ENCODE measurements at regions of chr2 and their contacts with region 1.

Region 1: DNA sequence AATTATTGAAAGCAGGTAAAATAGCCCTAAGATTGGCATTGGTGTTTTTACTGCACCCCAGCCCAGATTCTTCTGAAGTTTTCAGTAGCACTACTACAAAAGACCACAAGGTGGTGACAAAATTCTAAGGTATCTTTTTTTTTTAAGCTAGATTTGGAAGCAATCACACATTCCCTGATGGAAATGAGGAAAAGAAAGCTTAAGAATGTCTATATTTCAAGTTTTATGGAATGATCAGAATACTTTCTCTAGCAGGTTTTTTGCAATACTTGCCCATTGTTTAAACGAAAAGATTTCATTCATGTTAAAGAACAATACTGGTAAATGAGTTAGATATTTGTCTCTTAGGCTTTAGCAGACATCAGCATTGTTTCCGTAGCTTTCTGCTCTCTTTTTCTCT is 32.1 kb upstream of the ZNF638 start:
- DNase-seq: peak; percentile 51
- H3K4me3 ChIP-seq: no peak overlapping the region; a peak in 1 of 4 replicates
- H3K27ac ChIP-seq: no peak overlapping the region
- H3K4me1 ChIP-seq: no peaks in the 10 kb centered on the region
- H3K27me3 ChIP-seq: no peaks in the 10 kb centered on the region
- CTCF ChIP-seq: peak; percentile 78
- EP300 ChIP-seq: no peak
- RAD21 ChIP-seq: peak; percentile 79

Region 2: GRCh38 chr2:71008342-71008741 is 291.2 kb before region 1 on chr2:
- CTCF ChIA-PET with region 1: no interaction called
- POLR2A ChIA-PET with region 1: no interaction called
- DNase-seq: no peak
- H3K4me3 ChIP-seq: no peak overlapping the region
- H3K27ac ChIP-seq: no peak overlapping the region
- H3K4me1 ChIP-seq: no peaks in the 10 kb centered on the region
- H3K27me3 ChIP-seq: peaks cover 14% of the 10 kb centered on the region; the same call in 1 of the 2 replicates
- CTCF ChIP-seq: no peak
- EP300 ChIP-seq: no peak
- RAD21 ChIP-seq: no peak

Region 3: DNA sequence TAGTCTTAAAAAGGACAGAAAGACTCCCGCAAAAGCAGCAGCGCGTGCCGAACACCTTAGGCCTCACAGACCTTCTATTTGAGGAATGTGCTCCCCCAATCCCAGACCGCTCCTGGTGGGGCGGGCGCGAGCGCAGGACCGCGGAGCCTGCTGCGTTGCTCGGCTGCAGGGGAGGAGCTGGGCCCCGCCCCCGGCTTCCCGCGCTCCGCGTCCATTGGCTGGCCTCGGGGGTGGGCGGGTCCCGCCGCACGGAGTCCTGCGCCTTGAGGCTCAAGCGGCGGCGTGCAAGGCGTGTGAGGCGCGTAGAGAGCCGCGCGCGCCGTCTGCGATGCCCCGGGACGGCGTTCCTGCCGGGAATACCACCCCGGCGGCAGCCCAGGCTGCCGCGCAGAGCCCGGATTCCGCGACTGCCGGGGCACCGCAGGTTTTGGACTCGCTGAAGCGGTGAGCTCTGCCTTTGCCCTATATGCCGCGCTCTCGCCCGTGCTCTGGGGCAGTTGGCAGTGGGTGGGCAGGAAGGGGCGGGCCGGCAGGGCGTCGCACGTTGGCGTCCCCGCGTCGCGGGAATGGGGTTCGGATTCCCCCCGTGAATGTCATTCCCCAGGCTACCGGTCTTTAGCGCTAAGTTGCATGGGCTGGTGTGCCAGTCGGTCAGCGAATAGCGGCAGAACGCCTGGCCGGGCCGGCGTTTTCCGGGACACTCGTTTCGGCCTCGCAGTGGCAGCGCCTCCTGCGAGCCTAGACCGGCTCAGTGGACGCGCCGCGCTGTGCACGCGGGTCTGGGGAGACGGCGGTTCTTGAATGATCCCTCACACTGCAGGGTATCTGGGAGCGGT is 23.0 kb before region 1 on chr2:
- CTCF ChIA-PET with region 1: interaction called, 24 read pairs
- POLR2A ChIA-PET with region 1: no interaction called
- DNase-seq: peak; percentile 95
- H3K4me3 ChIP-seq: peak overlapping the region; percentile 61 to 67
- H3K27ac ChIP-seq: peak overlapping the region; percentile 23 to 44; a peak in 2 of 4 replicates
- H3K4me1 ChIP-seq: peaks cover 0 to 2% of the 10 kb centered on the region in 2 experiments; a peak in 2 of 4 replicates
- H3K27me3 ChIP-seq: no peaks in the 10 kb centered on the region; the same call in 1 of the 2 replicates
- CTCF ChIP-seq: no peak
- EP300 ChIP-seq: no peak
- RAD21 ChIP-seq: no peak

Region 4: GRCh38 chr2:71317060-71317459 is 17.6 kb after region 1 on chr2:
- CTCF ChIA-PET with region 1: interaction called, 16 read pairs
- POLR2A ChIA-PET with region 1: no interaction called
- DNase-seq: no peak
- H3K4me3 ChIP-seq: no peak overlapping the region
- H3K27ac ChIP-seq: no peak overlapping the region
- H3K4me1 ChIP-seq: no peaks in the 10 kb centered on the region; a peak in 1 of 4 replicates
- H3K27me3 ChIP-seq: no peaks in the 10 kb centered on the region
- CTCF ChIP-seq: no peak
- EP300 ChIP-seq: no peak
- RAD21 ChIP-seq: no peak

Region 5: DNA sequence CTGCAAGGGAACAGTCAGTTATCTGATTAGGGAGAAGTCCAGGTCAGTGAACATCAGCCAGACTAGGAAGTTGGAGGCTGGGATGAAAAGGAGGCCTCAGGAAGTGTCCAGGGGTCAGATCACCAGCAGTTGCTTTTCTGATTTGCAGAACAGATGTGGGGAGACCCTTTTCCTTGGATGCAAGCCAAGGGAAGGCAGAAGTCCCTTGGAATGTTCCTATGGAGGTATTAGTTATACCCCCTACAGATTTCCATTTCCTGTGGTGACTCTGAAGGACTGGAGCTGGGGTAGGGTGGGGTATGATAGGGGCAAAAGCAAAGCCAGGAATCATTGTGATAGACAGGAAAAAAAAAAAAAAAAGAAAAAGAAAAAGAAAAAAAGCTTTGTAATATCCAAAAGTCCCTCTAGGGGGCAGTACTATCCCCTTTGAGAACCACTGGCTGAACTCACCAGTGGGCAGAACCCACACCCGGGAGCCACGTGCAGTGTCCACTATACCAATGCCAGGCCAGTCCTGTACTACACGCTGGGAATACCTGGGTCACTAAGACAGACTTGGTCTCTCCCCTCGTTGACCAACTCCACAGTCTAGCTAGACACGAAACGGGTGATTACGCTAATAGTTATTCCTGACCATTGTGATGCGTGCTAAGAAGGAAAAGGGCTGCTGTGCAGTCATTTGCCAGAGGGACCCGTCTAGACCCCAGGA is 161.2 kb after region 1 on chr2:
- CTCF ChIA-PET with region 1: interaction called, 13 read pairs
- POLR2A ChIA-PET with region 1: no interaction called
- DNase-seq: peak; percentile 74
- H3K4me3 ChIP-seq: no peak overlapping the region
- H3K27ac ChIP-seq: no peak overlapping the region
- H3K4me1 ChIP-seq: peaks cover 0 to 32% of the 10 kb centered on the region in 2 experiments; a peak in 1 of 4 replicates
- H3K27me3 ChIP-seq: peaks cover 17% of the 10 kb centered on the region
- CTCF ChIP-seq: peak; percentile 73
- EP300 ChIP-seq: no peak
- RAD21 ChIP-seq: peak; percentile 47

Measured in SK-N-SH (cell line).